Activated T-helper 2 cell treated with anti-CD3 and anti-CD28 coated beads, Interferon-gamma antibody, Interleukin-2, Interleukin-4, amounts not matched to agents 10 μg/mL and 5 μg/mL and 100 μg/mL, durations not matched to agents 14 hours and 24 hours and 36 hours (primary cell): ENCODE measurements at regions of chr2 and their contacts with region 1.

Region 1: DNA sequence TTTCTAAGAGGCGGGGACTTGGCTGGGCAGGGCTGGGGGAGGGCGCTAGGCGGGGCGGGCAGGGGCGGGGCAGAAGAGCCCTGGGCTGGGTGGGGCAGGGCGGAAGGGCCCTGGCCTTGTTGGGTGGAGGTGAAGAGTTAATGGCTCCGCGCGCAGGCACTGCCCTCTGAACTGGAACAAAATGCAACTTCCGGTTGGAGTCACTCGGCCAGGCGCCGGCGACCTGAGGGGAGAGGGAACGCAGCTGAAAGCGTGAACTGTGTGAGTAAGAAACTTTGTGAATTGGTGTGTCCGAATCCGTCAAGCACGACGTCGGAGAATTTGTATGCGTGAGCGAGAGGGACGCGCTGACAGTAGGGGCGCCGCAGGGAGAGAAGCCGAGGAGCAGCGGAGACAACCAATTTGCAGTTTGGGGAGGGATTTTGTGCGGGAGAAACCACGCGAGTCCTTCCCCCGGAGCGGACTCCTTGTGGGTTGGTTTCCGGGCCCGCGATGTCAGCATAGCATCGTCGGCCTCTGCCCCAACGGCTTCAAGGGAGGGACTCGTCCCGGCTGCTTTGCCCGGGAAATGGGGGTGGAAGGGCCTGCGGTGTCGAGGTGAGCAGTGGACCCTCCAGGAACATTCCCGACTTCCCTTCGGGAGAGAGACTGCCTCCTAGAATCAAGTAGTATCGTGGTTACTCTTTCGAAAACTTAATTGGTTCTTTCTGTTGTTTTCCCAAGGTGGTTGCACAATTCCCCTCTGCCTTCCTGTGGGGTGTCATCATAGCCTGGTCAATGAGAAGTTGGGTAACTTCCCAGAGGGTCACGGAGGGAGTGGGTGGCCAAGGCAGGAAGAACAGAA is at the start of gene TANK:
- DNase-seq: peak; percentile 90
- H3K4me3 Mint-ChIP-seq: peak within 1 kb of the TSS; percentile 97
- H3K27ac Mint-ChIP-seq: peak within 1 kb of the TSS; percentile 99
- H3K4me1 Mint-ChIP-seq: peaks cover 53% of the 10 kb centered on the region
- H3K27me3 Mint-ChIP-seq: no peaks in the 10 kb centered on the region
- total RNA-seq, gene TANK: 66.2 and 70.7 TPM in 2 replicates

Region 2: DNA sequence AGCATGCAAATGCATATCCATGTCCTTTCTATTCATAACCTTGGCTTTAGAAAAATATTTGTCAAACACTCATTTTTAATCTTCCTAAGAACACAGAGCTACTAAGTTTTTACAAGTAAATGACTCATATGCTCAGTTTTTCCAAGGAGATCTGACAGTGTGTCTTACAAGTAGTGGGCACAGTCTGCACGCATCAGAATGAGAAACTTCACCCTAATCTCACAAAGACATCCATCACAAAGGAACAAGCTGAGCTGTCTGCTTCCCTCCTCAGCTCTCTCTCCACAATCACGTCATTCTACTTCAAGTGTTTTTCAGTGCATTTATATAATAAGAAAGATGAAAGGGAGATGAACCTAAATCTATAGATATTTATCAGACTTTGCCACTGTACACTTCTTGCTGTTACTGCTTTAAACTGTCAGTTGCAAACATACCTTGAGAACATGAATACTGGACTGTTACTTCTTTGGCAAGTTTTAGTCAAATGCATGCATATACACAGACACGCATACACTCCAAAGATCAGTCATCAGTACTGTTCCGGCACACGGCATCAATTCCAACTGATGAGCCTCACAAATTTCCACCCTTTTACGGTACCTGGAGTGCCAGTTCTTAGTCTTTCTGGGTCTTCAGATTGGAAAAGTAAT is 742.6 kb before region 1 on chr2:
- intact Hi-C with region 1: loop called (anchors 5 kb)
- DNase-seq: no peak
- H3K4me3 Mint-ChIP-seq: no peak overlapping the region
- H3K27ac Mint-ChIP-seq: peak overlapping the region; percentile 85
- H3K4me1 Mint-ChIP-seq: peaks cover 61% of the 10 kb centered on the region
- H3K27me3 Mint-ChIP-seq: no peaks in the 10 kb centered on the region

Region 3: GRCh38 chr2:161136696-161137324 is 23.6 kb before region 1 on chr2:
- intact Hi-C with region 1: loop called (anchors 1 kb)
- DNase-seq: no peak
- H3K4me3 Mint-ChIP-seq: peak overlapping the region; percentile 88
- H3K27ac Mint-ChIP-seq: peak overlapping the region; percentile 96
- H3K4me1 Mint-ChIP-seq: peaks cover 44% of the 10 kb centered on the region
- H3K27me3 Mint-ChIP-seq: no peaks in the 10 kb centered on the region

Region 4: GRCh38 chr2:161243905-161244304 is 83.5 kb after region 1 on chr2:
- intact Hi-C with region 1: loop called (anchors 2 kb)
- DNase-seq: no peak
- H3K4me3 Mint-ChIP-seq: peak overlapping the region; percentile 86
- H3K27ac Mint-ChIP-seq: peak overlapping the region; percentile 94
- H3K4me1 Mint-ChIP-seq: peaks cover 51% of the 10 kb centered on the region
- H3K27me3 Mint-ChIP-seq: no peaks in the 10 kb centered on the region